ENCODE measurements at regions of chrX and their contacts with region 1.

Region 1: GRCh38 chrX:153723354-153724251 is 584 bp downstream of the BCAP31 start:
- DNase-seq: peak; percentile 37
- ATAC-seq: peak; percentile 8
- H3K4me3 ChIP-seq: peak overlapping the region; percentile 92
- H3K27ac ChIP-seq: peak overlapping the region; percentile 92
- H3K4me1 ChIP-seq: peaks cover 31% of the 10 kb centered on the region
- H3K27me3 ChIP-seq: no peaks in the 10 kb centered on the region
- CTCF ChIP-seq: peak; percentile 51; the same call in 1 of the 2 replicates

Region 2: DNA sequence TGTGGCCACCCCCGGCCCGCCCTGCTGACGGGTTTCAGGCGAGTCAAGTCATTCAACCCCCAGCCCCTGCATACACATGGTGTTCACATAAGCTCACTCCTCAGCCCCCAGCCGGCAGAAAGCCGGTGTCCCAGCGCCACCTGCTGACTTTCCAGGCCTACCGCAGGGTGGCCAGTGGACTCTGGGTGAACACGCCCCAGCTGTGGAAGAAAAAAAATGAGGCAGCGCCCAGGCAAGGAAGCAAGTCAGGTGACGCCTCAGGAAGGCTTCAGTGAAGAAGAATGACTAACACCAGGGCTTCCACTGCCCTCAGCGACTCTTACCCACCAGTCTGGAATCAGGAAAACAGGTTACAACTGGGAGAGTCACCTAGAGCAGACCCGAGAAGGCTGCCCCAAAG is 15.2 kb before region 1 on chrX:
- CTCF ChIA-PET with region 1: no interaction called
- POLR2A ChIA-PET with region 1: no interaction called
- intact Hi-C with region 1: loop called (anchors 2 kb)
- DNase-seq: peak; percentile 90
- ATAC-seq: peak; percentile 94
- H3K4me3 ChIP-seq: no peak overlapping the region
- H3K27ac ChIP-seq: peak overlapping the region; percentile 56
- H3K4me1 ChIP-seq: peaks cover 9% of the 10 kb centered on the region; the same call in 1 of the 2 replicates
- H3K27me3 ChIP-seq: no peaks in the 10 kb centered on the region
- CTCF ChIP-seq: peak; percentile 73